Calu3 (cell line): ENCODE measurements at regions of chr1 and their contacts with region 1.

Region 1: GRCh38 chr1:247131236-247131635 is 27.1 kb upstream of the ZNF669 start:
- DNase-seq: no peak
- H3K4me3 Mint-ChIP-seq: no peak overlapping the region
- H3K27ac Mint-ChIP-seq: no peak overlapping the region
- H3K4me1 Mint-ChIP-seq: peaks cover 10% of the 10 kb centered on the region
- H3K27me3 Mint-ChIP-seq: no peaks in the 10 kb centered on the region
- CTCF ChIP-seq: no peak

Region 2: GRCh38 chr1:247172996-247173395 is 41.8 kb after region 1 on chr1:
- CTCF ChIA-PET with region 1: no interaction called
- intact Hi-C with region 1: loop called (anchors 2 kb)
- DNase-seq: no peak
- H3K4me3 Mint-ChIP-seq: no peak overlapping the region
- H3K27ac Mint-ChIP-seq: no peak overlapping the region
- H3K4me1 Mint-ChIP-seq: no peaks in the 10 kb centered on the region
- H3K27me3 Mint-ChIP-seq: no peaks in the 10 kb centered on the region
- CTCF ChIP-seq: no peak

Region 3: GRCh38 chr1:247833601-247834000 is 702.4 kb after region 1 on chr1:
- CTCF ChIA-PET with region 1: no interaction called
- intact Hi-C with region 1: no loop called
- DNase-seq: no peak
- H3K4me3 Mint-ChIP-seq: no peak overlapping the region
- H3K27ac Mint-ChIP-seq: no peak overlapping the region
- H3K4me1 Mint-ChIP-seq: no peaks in the 10 kb centered on the region
- H3K27me3 Mint-ChIP-seq: no peaks in the 10 kb centered on the region
- CTCF ChIP-seq: no peak